Naive thymus-derived CD4-positive, alpha-beta T cell (primary cell): ENCODE measurements at regions of chr18 and their contacts with region 1.

Region 1: GRCh38 chr18:77132371-77133050 is at the start of gene MBP:
- DNase-seq: peak; percentile 58 to 75 (median 68)
- ATAC-seq: peak; percentile 49
- H3K4me3 ChIP-seq: peak within 1 kb of the TSS; percentile 66
- H3K4me3 Mint-ChIP-seq: peak within 1 kb of the TSS; percentile 94 to 100 (median 97)
- H3K27ac ChIP-seq: peak within 1 kb of the TSS; percentile 87
- H3K27ac Mint-ChIP-seq: peak within 1 kb of the TSS; percentile 76 to 97 (median 96)
- H3K4me1 ChIP-seq: peaks cover 34 to 47% of the 10 kb centered on the region in 2 donors
- H3K4me1 Mint-ChIP-seq: peaks cover 43 to 66% (median 59%) of the 10 kb centered on the region in 7 donors
- H3K27me3 ChIP-seq: no peaks in the 10 kb centered on the region
- H3K27me3 Mint-ChIP-seq: no peaks in the 10 kb centered on the region
- total RNA-seq, gene MBP: 88.3 to 152 (median 116) TPM

Region 2: GRCh38 chr18:76736309-76736708 is 396.2 kb before region 1 on chr18:
- CTCF ChIA-PET with region 1: no interaction called
- POLR2A ChIA-PET with region 1: no interaction called
- intact Hi-C with region 1: no loop called
- DNase-seq: no peak
- ATAC-seq: no peak
- H3K4me3 ChIP-seq: no peak overlapping the region
- H3K4me3 Mint-ChIP-seq: no peak overlapping the region
- H3K27ac ChIP-seq: no peak overlapping the region
- H3K27ac Mint-ChIP-seq: no peak overlapping the region
- H3K4me1 ChIP-seq: no peaks in the 10 kb centered on the region
- H3K4me1 Mint-ChIP-seq: peaks cover 0 to 20% (median 2%) of the 10 kb centered on the region in 7 donors
- H3K27me3 ChIP-seq: no peaks in the 10 kb centered on the region
- H3K27me3 Mint-ChIP-seq: peaks cover 0 to 58% (median 5%) of the 10 kb centered on the region in 5 donors

Region 3: DNA sequence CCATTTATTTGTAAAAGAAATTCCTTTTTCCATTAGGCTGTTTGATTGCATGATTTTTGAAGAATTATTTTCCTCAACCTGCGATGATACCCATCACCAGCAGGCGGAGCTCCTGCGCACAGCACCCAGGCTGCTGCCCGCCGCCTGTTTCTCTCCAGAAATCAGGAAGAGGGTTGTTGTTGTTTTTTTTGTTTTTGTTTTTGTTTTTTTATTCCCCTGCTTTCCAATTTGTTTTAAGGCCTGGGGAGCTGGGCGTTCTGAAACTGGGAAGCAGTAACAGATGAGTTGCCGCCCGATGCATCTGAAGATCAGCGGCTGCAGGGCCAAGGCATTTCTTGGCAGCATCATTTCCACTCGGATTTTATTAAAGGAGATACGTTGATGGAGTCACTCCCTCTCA is 132.0 kb before region 1 on chr18:
- CTCF ChIA-PET with region 1: no interaction called
- POLR2A ChIA-PET with region 1: interaction called, 3 read pairs
- intact Hi-C with region 1: loop called in 1 of 2 experiments (anchors 2 kb)
- DNase-seq: peak in 7 of 9 donors; percentile 29 to 64 (median 50)
- ATAC-seq: peak; percentile 68
- H3K4me3 ChIP-seq: no peak overlapping the region
- H3K4me3 Mint-ChIP-seq: no peak overlapping the region
- H3K27ac ChIP-seq: no peak overlapping the region
- H3K27ac Mint-ChIP-seq: peak overlapping the region in 2 of 9 donors; percentile 11 to 41
- H3K4me1 ChIP-seq: peaks cover 7 to 10% of the 10 kb centered on the region in 2 donors
- H3K4me1 Mint-ChIP-seq: peaks cover 13 to 30% (median 28%) of the 10 kb centered on the region in 7 donors
- H3K27me3 ChIP-seq: no peaks in the 10 kb centered on the region
- H3K27me3 Mint-ChIP-seq: peaks cover 0 to 4% (median 0%) of the 10 kb centered on the region in 5 donors

Region 4: DNA sequence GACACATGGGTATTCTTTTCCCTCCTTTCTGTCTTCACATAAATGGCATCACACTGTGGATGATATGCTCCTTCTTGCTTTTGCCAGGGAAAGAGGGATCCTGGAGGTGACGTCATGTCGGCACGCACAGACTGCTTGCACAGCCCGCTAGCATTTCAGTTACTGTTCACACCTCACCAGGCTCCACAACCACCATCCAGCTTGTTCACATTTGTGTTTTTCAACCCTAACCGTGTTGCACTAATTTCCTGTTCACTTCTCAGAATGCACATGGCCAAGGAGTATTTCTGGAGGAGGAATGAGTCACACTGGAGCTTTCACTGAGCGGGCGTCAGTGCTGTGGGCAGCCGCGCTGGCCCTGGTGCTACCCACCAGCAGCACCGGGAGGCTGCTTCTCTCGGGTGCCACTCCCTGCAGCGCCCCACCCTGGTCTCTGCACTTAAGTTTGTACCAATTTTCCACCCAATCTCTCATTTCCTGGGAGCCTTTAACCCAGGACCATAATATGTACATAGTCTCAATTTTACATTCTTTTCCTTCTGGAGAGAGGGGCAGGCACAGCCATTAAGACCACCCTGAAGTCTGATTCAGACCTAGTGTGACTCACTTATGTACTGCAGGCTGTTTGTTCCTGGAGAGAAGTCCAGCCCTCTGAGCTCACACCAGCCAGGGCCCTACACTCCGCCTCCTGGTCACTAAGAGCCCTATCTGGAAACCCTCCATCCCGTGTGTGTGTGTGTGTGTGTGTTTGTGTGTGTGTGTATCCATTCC is 65.0 kb before region 1 on chr18:
- CTCF ChIA-PET with region 1: no interaction called
- POLR2A ChIA-PET with region 1: interaction called, 15 read pairs
- intact Hi-C with region 1: loop called (anchors 1 kb)
- DNase-seq: peak in 1 of 9 donors; percentile 74
- ATAC-seq: peak; percentile 60
- H3K4me3 ChIP-seq: peak overlapping the region; percentile 35
- H3K4me3 Mint-ChIP-seq: peak overlapping the region; percentile 54 to 85 (median 70)
- H3K27ac ChIP-seq: peak overlapping the region; percentile 52
- H3K27ac Mint-ChIP-seq: peak overlapping the region; percentile 88 to 100 (median 97)
- H3K4me1 ChIP-seq: peaks cover 85 to 100% of the 10 kb centered on the region in 2 donors
- H3K4me1 Mint-ChIP-seq: peaks cover 70 to 100% (median 96%) of the 10 kb centered on the region in 7 donors
- H3K27me3 ChIP-seq: no peaks in the 10 kb centered on the region
- H3K27me3 Mint-ChIP-seq: no peaks in the 10 kb centered on the region

Region 5: GRCh38 chr18:77108001-77108692 is 24.4 kb before region 1 on chr18:
- CTCF ChIA-PET with region 1: interaction called, 4 read pairs
- POLR2A ChIA-PET with region 1: interaction called, 68 read pairs
- intact Hi-C with region 1: loop called in 1 of 2 experiments (anchors 1 kb)
- DNase-seq: peak in 1 of 9 donors; percentile 29
- ATAC-seq: peak; percentile 43
- H3K4me3 ChIP-seq: peak overlapping the region; percentile 15
- H3K4me3 Mint-ChIP-seq: peak overlapping the region; percentile 17 to 92 (median 64)
- H3K27ac ChIP-seq: peak overlapping the region; percentile 70
- H3K27ac Mint-ChIP-seq: peak overlapping the region; percentile 78 to 99 (median 97)
- H3K4me1 ChIP-seq: peaks cover 61 to 69% of the 10 kb centered on the region in 2 donors
- H3K4me1 Mint-ChIP-seq: peaks cover 78 to 98% (median 96%) of the 10 kb centered on the region in 7 donors
- H3K27me3 ChIP-seq: no peaks in the 10 kb centered on the region
- H3K27me3 Mint-ChIP-seq: no peaks in the 10 kb centered on the region

Region 6: GRCh38 chr18:77147418-77147852 is 14.9 kb after region 1 on chr18:
- CTCF ChIA-PET with region 1: interaction called, 3 read pairs
- POLR2A ChIA-PET with region 1: interaction called, 83 read pairs
- intact Hi-C with region 1: loop called in 1 of 2 experiments (anchors 1 kb)
- DNase-seq: no peak
- ATAC-seq: peak; percentile 82
- H3K4me3 ChIP-seq: no peak overlapping the region
- H3K4me3 Mint-ChIP-seq: peak overlapping the region in 7 of 10 donors; percentile 18 to 57 (median 37)
- H3K27ac ChIP-seq: no peak overlapping the region
- H3K27ac Mint-ChIP-seq: peak overlapping the region; percentile 53 to 88 (median 81)
- H3K4me1 ChIP-seq: peaks cover 13 to 17% of the 10 kb centered on the region in 2 donors
- H3K4me1 Mint-ChIP-seq: peaks cover 23 to 35% (median 26%) of the 10 kb centered on the region in 7 donors
- H3K27me3 ChIP-seq: no peaks in the 10 kb centered on the region
- H3K27me3 Mint-ChIP-seq: no peaks in the 10 kb centered on the region

Region 7: GRCh38 chr18:77223653-77224052 is 91.1 kb after region 1 on chr18:
- CTCF ChIA-PET with region 1: no interaction called
- POLR2A ChIA-PET with region 1: no interaction called
- intact Hi-C with region 1: no loop called
- DNase-seq: no peak
- ATAC-seq: no peak
- H3K4me3 ChIP-seq: no peak overlapping the region
- H3K4me3 Mint-ChIP-seq: no peak overlapping the region
- H3K27ac ChIP-seq: no peak overlapping the region
- H3K27ac Mint-ChIP-seq: no peak overlapping the region
- H3K4me1 ChIP-seq: peaks cover 0 to 4% of the 10 kb centered on the region in 2 donors
- H3K4me1 Mint-ChIP-seq: peaks cover 0 to 8% (median 0%) of the 10 kb centered on the region in 7 donors
- H3K27me3 ChIP-seq: no peaks in the 10 kb centered on the region
- H3K27me3 Mint-ChIP-seq: peaks cover 0 to 22% (median 0%) of the 10 kb centered on the region in 5 donors

Region 8: DNA sequence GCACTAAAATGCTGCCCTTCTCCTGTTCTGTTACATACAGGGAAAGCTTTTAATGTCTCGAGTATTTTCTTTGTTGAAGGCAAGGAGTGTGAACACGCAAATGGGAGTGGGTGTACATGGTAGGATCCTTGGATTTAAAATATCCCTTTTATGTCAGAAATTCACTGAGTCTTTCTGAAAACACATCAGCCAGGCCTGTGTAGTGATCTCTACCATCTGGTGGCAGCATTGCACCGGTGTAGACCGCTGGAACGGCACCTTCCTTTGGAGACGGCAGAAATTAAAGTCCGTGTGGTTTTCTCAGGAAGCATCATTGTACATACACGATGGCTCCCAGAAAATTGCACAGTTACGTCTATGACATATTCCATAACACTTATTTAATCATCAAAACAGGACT is 633.0 kb after region 1 on chr18:
- CTCF ChIA-PET with region 1: no interaction called
- POLR2A ChIA-PET with region 1: no interaction called
- intact Hi-C with region 1: no loop called
- DNase-seq: no peak
- ATAC-seq: no peak
- H3K4me3 ChIP-seq: no peak overlapping the region
- H3K4me3 Mint-ChIP-seq: no peak overlapping the region
- H3K27ac ChIP-seq: no peak overlapping the region
- H3K27ac Mint-ChIP-seq: no peak overlapping the region
- H3K4me1 ChIP-seq: no peaks in the 10 kb centered on the region
- H3K4me1 Mint-ChIP-seq: no peaks in the 10 kb centered on the region
- H3K27me3 ChIP-seq: no peaks in the 10 kb centered on the region
- H3K27me3 Mint-ChIP-seq: peaks cover 11 to 29% (median 24%) of the 10 kb centered on the region in 5 donors